PC-3 (cell line): ENCODE measurements at regions of chr2 and their contacts with region 1.

Region 1: GRCh38 chr2:154375579-154375931 is 322.9 kb upstream of the KCNJ3 start:
- DNase-seq: peak; percentile 64
- ATAC-seq: peak; percentile 65
- H3K4me3 ChIP-seq: peak overlapping the region; percentile 49; the same call in 1 of the 2 replicates
- H3K27ac ChIP-seq: no peak overlapping the region
- H3K4me1 ChIP-seq: no peaks in the 10 kb centered on the region
- H3K27me3 ChIP-seq: 0 out of 2 replicates have a peak, but pooled peaks cover 4% of the 10 kb centered on the region
- CTCF ChIP-seq: peak; percentile 60

Region 2: GRCh38 chr2:153718457-153718856 is 657.1 kb before region 1 on chr2:
- CTCF ChIA-PET with region 1: no interaction called
- POLR2A ChIA-PET with region 1: no interaction called
- intact Hi-C with region 1: loop called (anchors 2 kb)
- DNase-seq: no peak
- ATAC-seq: no peak
- H3K4me3 ChIP-seq: no peak overlapping the region
- H3K27ac ChIP-seq: no peak overlapping the region
- H3K4me1 ChIP-seq: no peaks in the 10 kb centered on the region
- H3K27me3 ChIP-seq: 0 out of 2 replicates have a peak, but pooled peaks cover 3% of the 10 kb centered on the region
- CTCF ChIP-seq: 0 out of 2 replicates have a peak, but pooled peaks have one; percentile 10

Region 3: DNA sequence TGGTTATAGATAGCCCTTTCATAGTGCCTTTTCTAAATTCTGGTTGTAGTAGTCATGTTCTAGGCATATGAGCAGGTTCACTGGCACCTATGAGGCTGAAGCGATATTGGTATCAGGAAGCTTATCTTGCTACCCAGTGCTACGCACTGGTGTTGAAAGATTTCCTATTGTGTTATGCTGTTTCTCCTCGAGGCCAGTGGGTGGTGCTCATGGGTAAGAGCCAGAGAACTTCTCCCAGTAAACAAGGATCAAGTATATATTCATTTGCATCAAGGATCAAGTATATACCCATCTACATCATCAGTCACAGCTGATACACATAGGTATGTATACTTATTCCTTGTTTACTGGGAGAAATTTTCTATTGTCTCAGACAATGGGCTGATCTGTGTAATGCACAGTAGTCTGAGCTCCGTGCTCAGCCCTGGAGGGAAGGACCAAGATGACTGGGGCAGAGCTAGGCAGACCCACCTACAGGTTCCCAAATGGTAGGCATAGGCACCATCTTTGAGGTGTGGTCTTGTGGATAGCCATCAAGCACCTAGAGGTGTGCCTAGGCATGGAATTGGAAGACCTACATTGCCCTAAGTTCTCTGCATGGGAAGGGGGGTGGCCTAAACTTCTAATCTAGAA is 605.1 kb before region 1 on chr2:
- CTCF ChIA-PET with region 1: interaction called, 3 read pairs
- POLR2A ChIA-PET with region 1: no interaction called
- intact Hi-C with region 1: loop called (anchors 5 kb)
- DNase-seq: peak; percentile 8
- ATAC-seq: no peak
- H3K4me3 ChIP-seq: no peak overlapping the region
- H3K27ac ChIP-seq: no peak overlapping the region
- H3K4me1 ChIP-seq: no peaks in the 10 kb centered on the region
- H3K27me3 ChIP-seq: no peaks in the 10 kb centered on the region
- CTCF ChIP-seq: peak; percentile 49